ENCODE measurements at regions of chr11 and their contacts with region 1.

Region 1: DNA sequence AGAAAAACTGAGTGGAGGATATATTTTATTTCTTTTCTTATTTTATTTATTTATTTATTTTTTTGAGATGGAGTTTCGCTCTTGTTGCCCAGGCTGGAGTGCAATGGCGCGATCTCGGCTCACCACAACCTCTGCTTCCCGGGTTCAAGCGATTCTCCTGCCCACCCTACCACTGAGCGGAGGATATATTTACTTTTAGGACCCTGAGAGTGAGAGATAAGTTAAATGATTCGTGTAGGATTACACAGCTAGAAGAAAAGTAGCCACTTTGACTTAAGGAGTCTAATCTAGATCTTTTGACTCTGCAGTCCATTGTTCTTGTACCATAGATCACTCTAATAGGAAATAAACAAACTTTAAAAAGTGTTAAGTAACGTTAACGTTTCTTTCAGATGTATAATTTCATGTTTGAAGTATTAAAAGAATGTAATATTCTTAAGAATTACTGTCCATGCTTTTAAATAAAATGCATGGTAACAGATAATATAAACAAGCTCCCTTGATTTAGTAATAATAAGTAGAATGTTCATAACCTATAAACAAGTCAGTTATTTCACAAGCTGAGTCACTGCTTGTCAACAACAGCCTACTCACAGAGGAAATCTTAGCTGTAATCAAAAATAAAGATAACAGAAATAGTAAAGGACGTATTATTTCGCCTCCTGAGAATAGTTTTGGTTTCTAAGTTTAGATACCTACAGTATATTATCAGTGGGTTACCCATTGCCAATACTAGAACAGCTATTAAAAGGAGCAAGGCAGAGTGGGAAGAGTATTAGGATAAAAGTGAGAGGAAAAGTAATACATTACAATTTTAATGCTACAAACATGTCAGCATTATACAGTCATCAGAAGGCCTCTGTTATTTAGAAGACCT is 18.6 kb downstream of the USP47 start:
- DNase-seq: peak; percentile 77
- H3K4me3 ChIP-seq: peak overlapping the region in 1 of 3 experiments; percentile 12
- H3K27ac ChIP-seq: peak overlapping the region; percentile 44
- H3K4me1 ChIP-seq: peaks cover 16% of the 10 kb centered on the region
- H3K27me3 ChIP-seq: no peaks in the 10 kb centered on the region
- CTCF ChIP-seq: no peak
- POLR2A ChIP-seq: no peak

Region 2: DNA sequence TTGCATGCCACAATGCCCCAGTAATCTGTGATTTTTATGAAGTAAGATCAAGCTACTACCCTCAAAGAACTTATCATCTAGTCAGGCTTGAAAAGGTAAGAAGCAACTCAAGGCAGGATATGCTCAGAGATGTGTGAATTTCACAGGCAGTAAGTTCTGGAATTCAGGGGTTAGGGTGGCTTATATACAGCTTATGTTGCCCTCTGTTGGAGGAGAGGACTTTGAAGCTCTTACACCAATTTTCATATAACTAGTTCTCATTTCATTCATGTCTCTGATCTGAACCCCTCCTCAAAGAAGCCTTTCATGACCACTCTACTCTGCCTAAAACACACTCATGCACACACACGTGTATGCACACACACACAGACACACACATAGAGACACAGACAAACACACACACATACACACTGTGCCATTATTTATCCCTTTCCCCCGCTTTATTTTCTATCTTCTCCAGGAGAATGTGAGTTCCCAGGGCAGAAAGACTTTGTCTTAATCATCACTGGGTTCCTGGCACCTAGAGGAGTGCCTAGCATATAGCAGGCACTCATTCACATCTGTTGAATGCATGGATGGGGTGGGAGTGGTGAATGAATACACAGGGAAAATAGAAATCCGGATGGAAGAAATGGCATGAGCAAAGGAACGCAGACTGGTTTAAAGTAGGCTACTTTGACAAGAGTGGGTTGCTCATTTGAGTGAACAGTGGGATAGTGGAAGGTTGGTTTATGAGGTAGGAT is 781.8 kb before region 1 on chr11:
- CTCF ChIA-PET with region 1: no interaction called
- POLR2A ChIA-PET with region 1: no interaction called
- dilution Hi-C with region 1: no loop called
- intact Hi-C with region 1: no loop called
- DNase-seq: no peak
- H3K4me3 ChIP-seq: no peak overlapping the region
- H3K27ac ChIP-seq: no peak overlapping the region
- H3K4me1 ChIP-seq: no peaks in the 10 kb centered on the region
- H3K27me3 ChIP-seq: peaks cover 0 to 2% of the 10 kb centered on the region in 2 experiments
- CTCF ChIP-seq: no peak
- POLR2A ChIP-seq: no peak

Region 3: DNA sequence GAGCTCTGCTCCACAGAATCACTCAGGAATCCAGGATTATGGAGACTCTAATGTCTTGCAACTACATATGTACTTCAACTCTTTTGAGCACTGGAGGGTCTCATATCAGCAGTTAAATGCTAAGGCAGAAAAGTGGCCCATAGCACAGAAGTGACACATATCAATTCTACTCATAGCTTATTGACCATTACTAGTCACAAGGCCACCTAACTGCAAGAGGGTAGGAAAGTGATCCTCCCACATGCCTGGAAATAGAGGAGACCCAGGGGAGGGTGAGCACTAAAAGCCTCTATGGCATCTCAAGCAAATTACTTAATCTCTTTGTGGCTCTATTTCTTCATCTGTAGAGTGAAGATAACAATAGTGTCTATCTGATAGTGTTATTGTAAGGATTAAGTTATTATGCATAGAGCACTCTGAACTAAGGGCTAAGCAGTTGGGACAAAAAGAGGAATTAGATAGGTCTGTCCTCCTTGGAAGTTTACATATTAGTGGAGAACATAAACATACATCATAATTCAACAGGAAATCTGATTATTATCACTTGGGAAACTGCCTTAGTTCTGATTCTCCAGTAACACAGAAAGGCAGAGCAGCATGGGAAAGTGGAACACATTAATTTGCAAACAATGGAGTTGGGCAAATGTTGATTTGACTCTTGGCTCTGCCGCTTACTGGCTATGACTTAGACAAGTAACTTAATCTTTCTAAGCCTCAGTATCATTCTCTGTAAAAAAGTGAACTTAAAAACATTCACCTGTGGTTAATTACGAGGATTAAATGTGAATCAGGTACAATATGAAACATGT is 43.6 kb before region 1 on chr11:
- CTCF ChIA-PET with region 1: no interaction called
- POLR2A ChIA-PET with region 1: no interaction called
- dilution Hi-C with region 1: no loop called
- intact Hi-C with region 1: no loop called
- DNase-seq: peak; percentile 75
- H3K4me3 ChIP-seq: no peak overlapping the region
- H3K27ac ChIP-seq: no peak overlapping the region
- H3K4me1 ChIP-seq: no peaks in the 10 kb centered on the region
- H3K27me3 ChIP-seq: peaks cover 4 to 6% of the 10 kb centered on the region in 2 experiments
- CTCF ChIP-seq: no peak
- POLR2A ChIP-seq: no peak

Region 4: GRCh38 chr11:11841723-11842420 is 18.5 kb before region 1 on chr11 and contains the start of gene USP47:
- CTCF ChIA-PET with region 1: interaction called, 11 read pairs
- POLR2A ChIA-PET with region 1: no interaction called
- dilution Hi-C with region 1: no loop called
- intact Hi-C with region 1: loop called (anchors 2 kb)
- DNase-seq: peak; percentile 87
- H3K4me3 ChIP-seq: peak within 1 kb of the TSS; percentile 81 to 97 (median 86)
- H3K27ac ChIP-seq: peak within 1 kb of the TSS; percentile 95
- H3K4me1 ChIP-seq: peaks cover 22% of the 10 kb centered on the region
- H3K27me3 ChIP-seq: no peaks in the 10 kb centered on the region
- CTCF ChIP-seq: peak; percentile 44 to 55
- POLR2A ChIP-seq: peak; percentile 97
- total RNA-seq, gene USP47: 38.0 and 41.5 TPM in 2 replicates

Region 5: GRCh38 chr11:11848891-11849746 is 11.2 kb before region 1 on chr11:
- CTCF ChIA-PET with region 1: interaction called, 14 read pairs
- POLR2A ChIA-PET with region 1: no interaction called
- dilution Hi-C with region 1: no loop called
- intact Hi-C with region 1: no loop called
- DNase-seq: peak; percentile 64
- H3K4me3 ChIP-seq: no peak overlapping the region
- H3K27ac ChIP-seq: no peak overlapping the region
- H3K4me1 ChIP-seq: peaks cover 13% of the 10 kb centered on the region
- H3K27me3 ChIP-seq: no peaks in the 10 kb centered on the region
- CTCF ChIP-seq: peak; percentile 58 to 75
- POLR2A ChIP-seq: no peak

Measured in endothelial cell of umbilical vein (primary cell).